Caco-2 (cell line): ENCODE measurements at regions of chr9 and their contacts with region 1.

Region 1: DNA sequence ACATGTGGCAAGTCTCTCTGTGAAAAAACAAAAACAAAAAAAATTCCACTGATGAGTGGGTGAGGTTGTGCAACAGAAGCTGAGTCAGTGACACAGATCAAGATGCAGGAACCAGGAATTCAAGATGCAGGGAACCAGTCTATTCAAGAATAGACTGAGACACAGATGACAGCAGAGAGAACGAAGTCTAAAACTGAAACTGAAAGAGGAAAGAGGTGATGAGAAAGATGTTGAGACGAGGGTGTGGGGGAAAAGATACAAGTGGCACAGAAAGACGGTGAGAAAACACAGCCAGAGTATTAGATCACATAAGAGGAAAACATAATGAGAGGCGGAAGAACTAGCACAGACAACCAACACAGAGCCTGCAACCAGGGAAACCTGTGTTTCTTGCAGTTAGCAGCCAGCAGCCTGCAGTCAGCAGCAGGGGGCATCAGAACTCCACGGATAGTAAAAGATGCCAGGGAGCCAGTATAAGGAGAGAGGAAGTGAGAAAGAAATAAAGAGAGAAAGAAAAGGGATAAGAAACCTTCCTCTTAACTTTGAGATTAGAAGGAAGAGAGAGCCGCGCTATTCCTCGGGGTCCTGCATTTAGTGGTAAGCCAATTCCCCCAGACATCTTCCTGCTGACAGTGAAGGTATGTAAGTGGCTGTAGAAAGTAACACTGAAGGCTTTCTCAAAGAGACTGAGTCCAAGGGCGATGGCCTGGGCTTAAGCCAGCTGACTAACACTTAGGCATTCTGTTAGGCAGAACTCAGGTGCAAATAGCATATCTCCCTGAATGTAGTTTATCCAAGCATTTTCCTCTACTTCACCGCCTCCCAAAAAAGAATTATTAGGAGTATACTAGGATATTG is 79.0 kb downstream of the TLR4 start:
- DNase-seq: peak; percentile 59 to 66
- H3K4me3 ChIP-seq: no peak overlapping the region
- H3K4me3 Mint-ChIP-seq: no peak overlapping the region
- H3K27ac Mint-ChIP-seq: no peak overlapping the region
- H3K4me1 ChIP-seq: no peaks in the 10 kb centered on the region
- H3K4me1 Mint-ChIP-seq: no peaks in the 10 kb centered on the region
- H3K27me3 ChIP-seq: no peaks in the 10 kb centered on the region
- H3K27me3 Mint-ChIP-seq: no peaks in the 10 kb centered on the region
- CTCF ChIP-seq: peak; percentile 66 to 76

Region 2: DNA sequence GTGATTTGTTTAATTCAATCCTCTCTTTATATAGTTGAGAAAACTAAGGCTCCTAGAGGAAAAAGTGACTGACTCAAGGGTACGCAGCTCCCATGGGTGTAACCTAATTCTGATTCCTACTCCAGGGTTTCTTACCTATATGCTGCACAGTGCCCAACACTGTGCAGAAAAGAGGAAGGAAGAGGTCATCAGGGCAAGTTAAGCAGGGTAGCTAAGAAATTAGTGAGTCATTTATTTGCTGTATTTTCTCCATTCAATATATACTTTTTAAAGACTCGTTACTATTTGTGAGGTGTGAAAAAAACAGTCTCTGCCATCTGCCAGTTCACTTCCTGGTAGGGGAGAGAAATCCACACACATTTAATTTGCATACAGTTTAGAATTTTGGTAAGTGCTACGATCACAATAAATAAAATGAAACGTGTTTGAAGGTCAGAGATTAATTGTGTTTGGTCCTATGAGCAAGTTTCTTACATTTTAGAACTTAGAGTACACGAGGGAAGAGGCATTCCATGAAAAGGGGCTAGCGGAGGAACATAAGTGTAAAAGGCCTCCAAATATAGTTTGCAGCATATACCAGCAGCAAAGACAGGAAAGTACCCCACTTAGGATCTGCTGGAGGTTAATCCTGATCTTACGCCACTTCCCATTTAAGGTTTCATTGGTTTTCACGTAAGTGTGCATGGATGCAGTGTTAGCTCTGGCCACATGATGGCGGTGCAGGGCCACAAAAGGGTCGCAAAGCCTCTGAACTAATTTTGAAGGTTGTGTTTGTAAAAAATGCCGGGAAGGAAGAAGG is 138.8 kb before region 1 on chr9:
- CTCF ChIA-PET with region 1: no interaction called
- POLR2A ChIA-PET with region 1: no interaction called
- intact Hi-C with region 1: loop called (anchors 5 kb)
- DNase-seq: peak; percentile 57 to 67
- H3K4me3 ChIP-seq: no peak overlapping the region
- H3K4me3 Mint-ChIP-seq: no peak overlapping the region
- H3K27ac Mint-ChIP-seq: no peak overlapping the region
- H3K4me1 ChIP-seq: no peaks in the 10 kb centered on the region
- H3K4me1 Mint-ChIP-seq: no peaks in the 10 kb centered on the region
- H3K27me3 ChIP-seq: no peaks in the 10 kb centered on the region; the same call in 1 of the 2 replicates
- H3K27me3 Mint-ChIP-seq: peaks cover 9% of the 10 kb centered on the region
- CTCF ChIP-seq: peak; percentile 91 to 93

Region 3: DNA sequence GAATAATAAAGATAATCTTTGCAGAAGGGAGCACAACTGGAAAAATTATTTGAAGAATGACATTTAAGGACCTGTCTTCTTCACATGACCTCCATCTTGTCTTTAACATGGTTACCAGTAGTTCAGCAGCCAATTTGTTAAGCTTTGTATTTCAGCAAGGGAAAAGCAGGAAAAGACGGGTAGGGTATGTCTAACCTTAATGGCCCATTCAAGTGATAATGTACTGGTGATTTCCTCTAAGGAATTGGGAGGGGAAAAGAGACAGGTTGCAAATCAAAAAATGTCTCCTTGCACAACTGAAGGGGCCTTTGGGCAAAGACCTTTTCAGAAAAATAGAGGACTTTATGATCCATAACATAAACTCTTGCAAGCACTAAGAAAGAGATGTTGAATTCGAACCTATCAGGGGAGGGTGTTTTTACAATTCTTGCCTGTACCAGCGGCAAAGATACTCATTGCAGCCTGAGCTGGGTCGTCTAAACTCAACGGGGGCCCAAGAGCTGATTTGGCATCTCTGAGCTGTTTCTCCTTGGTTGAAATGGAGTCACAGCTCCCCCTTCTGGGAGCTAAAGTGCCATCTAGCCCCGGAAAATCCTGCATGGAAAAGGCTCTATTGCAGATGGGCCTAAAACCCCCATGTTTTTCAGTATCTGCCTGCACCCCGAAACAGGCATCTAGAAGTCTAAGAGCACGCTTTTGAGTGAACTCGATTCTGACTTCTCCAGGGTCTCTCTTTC is 1582.3 kb after region 1 on chr9:
- CTCF ChIA-PET with region 1: no interaction called
- POLR2A ChIA-PET with region 1: no interaction called
- intact Hi-C with region 1: loop called (anchors 5 kb)
- DNase-seq: peak; percentile 38 to 40
- H3K4me3 ChIP-seq: no peak overlapping the region
- H3K4me3 Mint-ChIP-seq: no peak overlapping the region
- H3K27ac Mint-ChIP-seq: no peak overlapping the region
- H3K4me1 ChIP-seq: no peaks in the 10 kb centered on the region
- H3K4me1 Mint-ChIP-seq: no peaks in the 10 kb centered on the region
- H3K27me3 ChIP-seq: no peaks in the 10 kb centered on the region
- H3K27me3 Mint-ChIP-seq: peaks cover 10% of the 10 kb centered on the region
- CTCF ChIP-seq: peak; percentile 43 to 52